ENCODE measurements at regions of chr18 and their contacts with region 1.

Region 1: GRCh38 chr18:59358712-59359575 is at the start of gene LMAN1:
- H3K4me3 Mint-ChIP-seq: peak within 1 kb of the TSS; percentile 78
- H3K27ac Mint-ChIP-seq: peak within 1 kb of the TSS; percentile 77
- H3K4me1 Mint-ChIP-seq: peaks cover 20% of the 10 kb centered on the region
- H3K27me3 Mint-ChIP-seq: peaks cover 5% of the 10 kb centered on the region

Region 2: GRCh38 chr18:59139371-59140298 is 219.3 kb before region 1 on chr18 and contains the start of gene SEC11C:
- intact Hi-C with region 1: loop called (anchors 2 kb)
- H3K4me3 Mint-ChIP-seq: peak within 1 kb of the TSS; percentile 93
- H3K27ac Mint-ChIP-seq: peak within 1 kb of the TSS; percentile 93
- H3K4me1 Mint-ChIP-seq: peaks cover 19% of the 10 kb centered on the region
- H3K27me3 Mint-ChIP-seq: peaks cover 21% of the 10 kb centered on the region

Region 3: DNA sequence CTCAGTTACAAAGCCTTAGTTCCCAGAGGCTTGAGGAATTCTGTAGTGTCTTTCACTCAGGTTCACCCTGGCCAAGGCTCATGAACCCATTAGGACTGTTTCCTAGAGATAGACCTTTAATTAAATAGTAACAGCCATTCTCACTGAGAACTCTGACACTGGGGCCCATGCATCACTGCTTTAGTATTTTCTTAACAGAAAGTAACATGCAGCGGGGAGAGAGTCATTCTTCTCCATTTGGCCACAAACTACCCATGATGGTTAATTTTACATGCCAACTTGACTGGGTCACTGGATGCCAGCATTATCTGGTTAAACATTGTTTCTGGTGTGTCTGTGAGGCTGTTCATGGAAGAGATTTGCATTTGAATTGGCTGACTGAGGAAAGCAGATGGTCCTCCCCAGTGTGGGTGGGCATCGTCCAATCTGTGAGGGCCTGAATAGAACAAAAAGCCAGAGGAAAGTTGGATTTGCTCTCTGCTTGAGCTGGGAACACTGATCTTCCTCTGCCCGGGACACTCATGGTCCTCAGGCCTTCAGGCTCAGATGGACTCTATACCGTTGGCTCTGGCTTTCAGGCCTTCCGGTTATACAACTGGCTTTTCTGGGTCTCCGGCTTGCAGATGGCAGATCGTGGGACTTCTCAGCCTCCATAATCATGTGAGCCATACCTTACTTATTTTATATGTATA is 34.9 kb before region 1 on chr18:
- intact Hi-C with region 1: no loop called
- H3K4me3 Mint-ChIP-seq: no peak overlapping the region
- H3K27ac Mint-ChIP-seq: no peak overlapping the region
- H3K4me1 Mint-ChIP-seq: no peaks in the 10 kb centered on the region
- H3K27me3 Mint-ChIP-seq: peaks cover 2% of the 10 kb centered on the region

Region 4: GRCh38 chr18:59488899-59489298 is 130.0 kb after region 1 on chr18:
- intact Hi-C with region 1: no loop called
- H3K4me3 Mint-ChIP-seq: no peak overlapping the region
- H3K27ac Mint-ChIP-seq: no peak overlapping the region
- H3K4me1 Mint-ChIP-seq: no peaks in the 10 kb centered on the region
- H3K27me3 Mint-ChIP-seq: no peaks in the 10 kb centered on the region

Measured in dendritic cell treated with granulocyte-macrophage colony-stimulating factor and Interleukin-4, amounts not matched to agents 40 ng/mL and 50 ng/mL, for 4 days (primary cell).